GM13977 (cell line): ENCODE measurements at regions of chr5 and their contacts with region 1.

Region 1: DNA sequence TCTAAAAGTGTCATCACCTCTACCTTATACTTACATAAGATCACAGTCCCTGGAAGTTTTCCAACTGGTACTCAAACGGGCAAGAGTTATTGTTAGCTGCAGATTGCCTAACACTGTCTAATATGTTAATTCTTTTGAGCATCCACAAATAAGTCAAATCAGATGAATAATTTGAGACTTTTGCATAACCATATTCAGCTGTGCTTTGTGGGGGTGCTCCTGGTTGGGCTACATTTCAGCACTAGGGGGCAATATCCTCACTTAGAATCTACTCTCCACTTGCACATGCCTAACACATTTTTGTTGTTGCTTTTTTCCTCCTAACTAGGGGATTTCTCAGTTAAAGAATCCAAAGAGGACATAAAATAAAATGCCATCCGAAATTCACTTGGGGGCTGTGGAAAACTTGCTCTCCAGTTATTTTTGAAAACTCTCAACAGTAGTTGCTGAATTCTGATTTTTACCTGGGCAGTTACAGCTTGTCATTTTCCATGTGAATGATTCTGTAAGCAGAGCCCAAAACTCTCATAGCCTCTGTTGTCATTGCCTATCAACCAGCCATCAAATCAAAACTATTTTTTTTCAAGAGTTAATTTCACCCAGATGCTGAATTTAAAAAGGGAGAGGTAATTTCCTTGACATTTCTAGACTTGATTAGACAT is 71.5 kb downstream of the TRIM36 start:
- DNase-seq: peak; percentile 60
- CTCF ChIP-seq: peak; percentile 75

Region 2: GRCh38 chr5:115246361-115246991 is 148.3 kb after region 1 on chr5:
- in situ Hi-C with region 1: loop called (anchors 10 kb)
- DNase-seq: no peak
- CTCF ChIP-seq: peak; percentile 54

Region 3: DNA sequence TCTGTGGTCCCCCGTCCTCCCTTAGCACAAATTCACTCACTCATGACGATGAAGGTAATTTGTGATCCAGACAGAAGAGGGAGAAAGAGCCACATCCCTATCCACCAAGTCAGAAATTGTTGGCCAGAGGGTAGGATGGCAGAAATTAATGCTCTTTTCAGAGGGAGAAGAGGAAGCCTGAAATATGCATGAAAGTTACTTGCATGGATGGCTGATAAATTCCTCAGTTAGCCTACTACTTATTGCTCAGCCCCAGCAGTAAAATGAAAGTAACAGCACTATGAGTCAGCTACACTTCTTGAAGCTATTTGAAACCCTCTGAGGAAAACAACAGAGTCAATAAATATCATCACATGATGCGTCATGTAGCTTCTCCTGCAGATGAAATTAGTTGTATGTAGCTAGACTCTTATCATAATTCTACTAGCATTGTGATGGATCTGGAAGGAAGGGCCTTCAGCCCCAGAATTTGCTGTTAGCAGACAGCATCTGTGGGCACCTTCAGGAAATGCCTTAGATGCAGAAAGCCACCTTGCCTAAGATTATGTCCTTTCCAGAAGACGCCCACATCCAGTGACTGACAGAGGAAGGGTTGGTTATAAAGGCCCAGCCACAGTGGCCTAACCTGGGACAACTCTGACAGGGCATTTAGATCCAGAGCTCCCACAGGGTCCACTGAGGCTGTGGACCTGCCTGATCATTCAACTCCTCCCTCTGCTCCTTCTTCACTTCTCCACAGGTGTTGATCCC is 279.5 kb after region 1 on chr5:
- in situ Hi-C with region 1: no loop called
- DNase-seq: peak; percentile 34
- CTCF ChIP-seq: no peak